PC-3 (cell line): ENCODE measurements at regions of chr14 and their contacts with region 1.

Region 1: DNA sequence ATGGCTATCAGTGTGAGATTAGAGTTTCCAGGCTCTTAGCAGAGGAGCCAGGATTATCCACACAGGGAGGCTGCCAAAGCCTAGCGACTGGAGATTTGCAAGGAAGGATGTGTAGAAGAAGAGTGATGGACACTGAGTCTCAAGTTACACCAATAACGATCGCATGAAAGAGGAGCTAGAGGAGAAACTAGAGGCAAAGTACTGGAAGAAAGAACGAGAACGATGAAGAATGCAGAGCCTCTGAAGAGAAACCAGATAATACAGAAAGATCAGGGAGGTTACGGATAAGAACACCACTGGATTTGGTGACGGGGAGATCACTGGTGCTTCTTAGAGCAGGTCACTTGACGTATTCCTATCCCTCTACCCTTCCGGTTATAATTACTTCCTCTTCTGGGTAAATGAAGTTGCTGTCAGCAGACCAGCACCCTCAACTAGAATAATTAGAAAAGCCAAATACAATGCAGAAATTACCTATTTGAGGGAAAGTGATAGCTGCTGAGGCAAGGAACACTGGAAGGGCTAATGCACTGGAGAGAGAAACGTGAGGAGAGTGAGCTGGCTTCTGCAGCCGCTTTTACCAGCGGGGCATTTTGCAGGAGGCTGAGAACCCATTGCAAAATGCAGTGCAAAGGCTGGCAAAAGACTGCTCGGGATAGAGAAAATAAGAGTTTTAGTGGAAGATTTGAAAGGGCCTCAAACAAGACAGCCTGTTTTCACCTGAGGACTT is 93.1 kb upstream of the HIF1A start:
- DNase-seq: no peak
- ATAC-seq: peak; percentile 64
- H3K4me3 ChIP-seq: no peak overlapping the region
- H3K27ac ChIP-seq: peak overlapping the region; percentile 77
- H3K4me1 ChIP-seq: peaks cover 26% of the 10 kb centered on the region
- H3K27me3 ChIP-seq: no peaks in the 10 kb centered on the region
- CTCF ChIP-seq: no peak

Region 2: GRCh38 chr14:61568572-61569131 is 33.5 kb before region 1 on chr14:
- CTCF ChIA-PET with region 1: no interaction called
- POLR2A ChIA-PET with region 1: interaction called, 3 read pairs
- intact Hi-C with region 1: loop called (anchors 2 kb)
- DNase-seq: peak; percentile 57
- ATAC-seq: peak; percentile 11; the same call in 1 of the 2 replicates
- H3K4me3 ChIP-seq: peak overlapping the region; percentile 11; the same call in 1 of the 2 replicates
- H3K27ac ChIP-seq: peak overlapping the region; percentile 96
- H3K4me1 ChIP-seq: peaks cover 88% of the 10 kb centered on the region
- H3K27me3 ChIP-seq: no peaks in the 10 kb centered on the region
- CTCF ChIP-seq: peak; percentile 21; the same call in 1 of the 2 replicates